Gastrocnemius medialis (tissue), 4 donors: ENCODE measurements at regions of chrX and their contacts with region 1.

Region 1: GRCh38 chrX:2690856-2691542 is at the start of gene CD99:
- DNase-seq: peak; percentile 84 to 85
- ATAC-seq: peak; percentile 77 to 82
- H3K4me3 ChIP-seq: peak within 1 kb of the TSS; percentile 70 to 88 (median 81)
- H3K27ac ChIP-seq: peak within 1 kb of the TSS; percentile 75 to 95 (median 84)
- H3K4me1 ChIP-seq: peaks cover 34 to 35% of the 10 kb centered on the region in 2 donors
- H3K27me3 ChIP-seq: no peaks in the 10 kb centered on the region
- CTCF ChIP-seq: no peak
- POLR2A ChIP-seq: peak; percentile 62 to 77
- total RNA-seq, gene CD99: 110 to 207 (median 133) TPM

Region 2: GRCh38 chrX:2500267-2501075 is 190.5 kb before region 1 on chrX and contains the starts of genes DHRSX and ZBED1:
- in situ Hi-C with region 1: no loop called
- intact Hi-C with region 1: loop called (anchors 5 kb)
- DNase-seq: peak in 1 of 2 donors; percentile 33
- ATAC-seq: peak; percentile 43
- H3K4me3 ChIP-seq: peak within 1 kb of the TSS; percentile 63 to 88 (median 69)
- H3K27ac ChIP-seq: peak within 1 kb of the TSS; percentile 81 to 99 (median 94)
- H3K4me1 ChIP-seq: peaks cover 23 to 29% of the 10 kb centered on the region in 2 donors
- H3K27me3 ChIP-seq: no peaks in the 10 kb centered on the region
- CTCF ChIP-seq: no peak
- POLR2A ChIP-seq: peak in 1 of 2 donors; percentile 24
- total RNA-seq, gene DHRSX: 9.8 to 31.1 (median 13.6) TPM
- total RNA-seq, gene ZBED1: 76.8 to 191 (median 131) TPM

Region 3: GRCh38 chrX:2595258-2595657 is 95.7 kb before region 1 on chrX:
- in situ Hi-C with region 1: no loop called
- intact Hi-C with region 1: no loop called
- DNase-seq: no peak
- ATAC-seq: peak in 1 of 2 donors; percentile 60
- H3K4me3 ChIP-seq: no peak overlapping the region
- H3K27ac ChIP-seq: no peak overlapping the region
- H3K4me1 ChIP-seq: no peaks in the 10 kb centered on the region
- H3K27me3 ChIP-seq: no peaks in the 10 kb centered on the region
- CTCF ChIP-seq: no peak
- POLR2A ChIP-seq: no peak

Region 4: GRCh38 chrX:2732076-2732475 is 41.1 kb after region 1 on chrX:
- in situ Hi-C with region 1: no loop called
- intact Hi-C with region 1: no loop called
- DNase-seq: no peak
- ATAC-seq: no peak
- H3K4me3 ChIP-seq: no peak overlapping the region
- H3K27ac ChIP-seq: no peak overlapping the region
- H3K4me1 ChIP-seq: no peaks in the 10 kb centered on the region
- H3K27me3 ChIP-seq: no peaks in the 10 kb centered on the region
- CTCF ChIP-seq: no peak
- POLR2A ChIP-seq: no peak